ENCODE measurements at regions of chr7 and their contacts with region 1.

Region 1: GRCh38 chr7:131699323-131699722 is 142.9 kb upstream of the PODXL start:
- DNase-seq: no peak
- H3K4me3 ChIP-seq: no peak overlapping the region
- H3K4me3 Mint-ChIP-seq: no peak overlapping the region
- H3K27ac ChIP-seq: no peak overlapping the region
- H3K27ac Mint-ChIP-seq: no peak overlapping the region
- H3K4me1 ChIP-seq: no peaks in the 10 kb centered on the region
- H3K4me1 Mint-ChIP-seq: no peaks in the 10 kb centered on the region
- H3K27me3 ChIP-seq: no peaks in the 10 kb centered on the region
- H3K27me3 Mint-ChIP-seq: peaks cover 4 to 6% of the 10 kb centered on the region in 2 donors

Region 2: GRCh38 chr7:131346885-131347592 is 352.3 kb before region 1 on chr7:
- CTCF ChIA-PET with region 1: no interaction called
- POLR2A ChIA-PET with region 1: no interaction called
- intact Hi-C with region 1: no loop called
- DNase-seq: no peak
- H3K4me3 ChIP-seq: no peak overlapping the region
- H3K4me3 Mint-ChIP-seq: peak overlapping the region in 3 of 8 donors; percentile 0 to 50 (median 30)
- H3K27ac ChIP-seq: no peak overlapping the region
- H3K27ac Mint-ChIP-seq: peak overlapping the region in 3 of 7 donors; percentile 11 to 54 (median 43)
- H3K4me1 ChIP-seq: peaks cover 29% of the 10 kb centered on the region
- H3K4me1 Mint-ChIP-seq: peaks cover 30 to 58% (median 43%) of the 10 kb centered on the region in 4 donors
- H3K27me3 ChIP-seq: no peaks in the 10 kb centered on the region
- H3K27me3 Mint-ChIP-seq: no peaks in the 10 kb centered on the region

Region 3: DNA sequence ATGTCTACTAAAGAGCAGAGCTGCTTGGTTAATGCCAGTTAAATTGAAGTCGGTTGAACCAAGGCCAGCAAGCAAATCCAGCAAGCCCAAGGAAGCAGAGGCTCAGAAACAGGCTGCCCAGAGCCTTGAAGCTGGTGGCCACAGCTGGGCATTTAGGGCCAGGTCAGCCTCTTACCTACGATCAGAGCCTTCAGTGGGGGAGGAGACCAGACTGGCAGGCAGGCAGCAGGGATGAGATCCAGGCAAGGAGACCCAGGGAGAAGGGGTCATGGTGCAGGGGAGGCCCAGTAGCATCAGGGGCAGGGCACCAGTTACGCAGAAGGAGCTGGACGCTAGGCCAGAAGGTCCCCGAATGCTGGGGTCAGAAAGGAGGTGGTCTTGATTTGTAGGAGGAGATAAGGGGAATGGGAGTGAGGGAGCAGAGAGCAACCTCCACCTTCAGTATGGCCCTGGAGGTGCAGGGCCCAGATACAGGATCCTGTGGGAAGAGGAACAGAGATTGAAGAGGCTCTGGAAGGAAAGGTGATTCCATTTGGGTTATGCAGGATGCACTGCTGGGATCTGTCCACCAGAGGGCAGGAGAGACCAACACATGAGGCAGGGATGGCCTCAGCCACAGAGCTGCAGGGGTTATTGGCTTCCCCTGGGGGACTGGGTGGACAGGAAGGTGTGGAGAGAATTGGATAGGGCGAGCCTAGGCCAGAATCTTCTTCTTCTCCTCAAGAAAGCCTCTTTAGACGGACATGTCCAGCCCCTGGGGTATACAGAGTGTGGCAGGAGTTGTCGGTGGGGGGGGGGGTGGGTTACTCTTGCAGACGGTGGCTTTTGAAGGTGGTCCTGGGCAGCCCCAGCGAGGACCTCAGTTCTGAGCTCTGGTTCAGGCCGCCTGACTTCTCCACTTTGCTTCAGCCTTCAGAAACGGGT is 10.3 kb before region 1 on chr7:
- CTCF ChIA-PET with region 1: interaction called, 20 read pairs
- POLR2A ChIA-PET with region 1: no interaction called
- intact Hi-C with region 1: no loop called
- DNase-seq: peak in 4 of 5 donors; percentile 32 to 37 (median 34)
- H3K4me3 ChIP-seq: no peak overlapping the region
- H3K4me3 Mint-ChIP-seq: no peak overlapping the region
- H3K27ac ChIP-seq: no peak overlapping the region
- H3K27ac Mint-ChIP-seq: no peak overlapping the region
- H3K4me1 ChIP-seq: no peaks in the 10 kb centered on the region
- H3K4me1 Mint-ChIP-seq: peaks cover 0 to 9% (median 2%) of the 10 kb centered on the region in 4 donors
- H3K27me3 ChIP-seq: no peaks in the 10 kb centered on the region
- H3K27me3 Mint-ChIP-seq: peaks cover 26 to 47% of the 10 kb centered on the region in 2 donors